Caco-2 (cell line): ENCODE measurements at regions of chrX and their contacts with region 1.

Region 1: GRCh38 chrX:111100186-111100980 is 4.4 kb downstream of the PAK3 start:
- DNase-seq: peak in 1 of 2 experiments; percentile 24
- H3K4me3 ChIP-seq: no peak overlapping the region
- H3K4me3 Mint-ChIP-seq: no peak overlapping the region
- H3K27ac Mint-ChIP-seq: no peak overlapping the region
- H3K4me1 ChIP-seq: no peaks in the 10 kb centered on the region
- H3K4me1 Mint-ChIP-seq: no peaks in the 10 kb centered on the region
- H3K27me3 ChIP-seq: no peaks in the 10 kb centered on the region
- H3K27me3 Mint-ChIP-seq: peaks cover 7% of the 10 kb centered on the region
- CTCF ChIP-seq: peak; percentile 16 to 28

Region 2: GRCh38 chrX:110836982-110837381 is 263.4 kb before region 1 on chrX:
- CTCF ChIA-PET with region 1: no interaction called
- POLR2A ChIA-PET with region 1: no interaction called
- intact Hi-C with region 1: no loop called
- DNase-seq: no peak
- H3K4me3 ChIP-seq: no peak overlapping the region
- H3K4me3 Mint-ChIP-seq: no peak overlapping the region
- H3K27ac Mint-ChIP-seq: no peak overlapping the region
- H3K4me1 ChIP-seq: no peaks in the 10 kb centered on the region
- H3K4me1 Mint-ChIP-seq: no peaks in the 10 kb centered on the region
- H3K27me3 ChIP-seq: no peaks in the 10 kb centered on the region
- H3K27me3 Mint-ChIP-seq: no peaks in the 10 kb centered on the region
- CTCF ChIP-seq: peak in 1 of 2 experiments; percentile 20

Region 3: DNA sequence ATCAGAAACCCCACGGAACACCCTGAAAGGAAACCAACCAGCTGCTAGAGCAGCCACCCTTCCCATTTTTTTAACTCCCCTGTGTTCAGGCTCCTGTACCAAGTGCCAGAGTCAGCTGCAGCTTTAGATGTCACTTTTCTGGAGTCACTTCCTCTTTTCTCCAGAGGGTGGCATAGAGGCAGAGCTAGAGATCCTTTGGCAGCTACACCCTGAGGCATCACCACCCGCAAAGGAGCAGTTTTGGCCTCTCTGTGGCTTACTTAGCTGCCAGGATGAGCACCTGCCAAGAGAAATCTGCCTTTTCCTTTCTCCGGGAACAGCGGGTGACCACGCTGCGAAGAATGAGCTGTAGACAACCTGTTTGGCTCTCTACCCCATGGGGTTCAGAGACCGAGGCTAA is 246.8 kb before region 1 on chrX:
- CTCF ChIA-PET with region 1: interaction called, 5 read pairs
- POLR2A ChIA-PET with region 1: no interaction called
- intact Hi-C with region 1: loop called (anchors 2 kb)
- DNase-seq: peak in 1 of 2 experiments; percentile 1
- H3K4me3 ChIP-seq: no peak overlapping the region
- H3K4me3 Mint-ChIP-seq: no peak overlapping the region
- H3K27ac Mint-ChIP-seq: no peak overlapping the region
- H3K4me1 ChIP-seq: no peaks in the 10 kb centered on the region
- H3K4me1 Mint-ChIP-seq: no peaks in the 10 kb centered on the region
- H3K27me3 ChIP-seq: no peaks in the 10 kb centered on the region; the same call in 1 of the 2 replicates
- H3K27me3 Mint-ChIP-seq: peaks cover 4% of the 10 kb centered on the region
- CTCF ChIP-seq: no peak

Region 4: DNA sequence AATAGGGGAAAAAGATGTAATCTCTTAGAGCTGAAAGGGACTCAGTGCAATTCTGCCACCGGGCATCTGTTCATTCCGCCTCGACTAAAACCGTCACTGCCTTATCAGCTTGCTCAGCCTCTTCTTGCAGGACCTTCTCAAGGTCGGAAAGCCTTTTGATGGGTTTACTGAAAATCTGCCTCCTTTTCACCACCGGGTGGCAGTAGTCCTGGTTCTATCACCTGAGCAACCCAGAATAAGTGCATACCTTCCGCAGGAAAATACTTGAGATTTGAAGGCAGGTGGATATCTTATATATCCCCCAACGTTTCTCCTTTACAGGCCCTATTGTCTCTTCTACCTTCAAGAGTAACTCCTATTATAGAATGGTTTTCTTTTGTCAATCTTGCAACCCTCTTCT is 107.8 kb before region 1 on chrX:
- CTCF ChIA-PET with region 1: interaction called, 8 read pairs
- POLR2A ChIA-PET with region 1: no interaction called
- intact Hi-C with region 1: loop called (anchors 1 kb)
- DNase-seq: peak; percentile 32
- H3K4me3 ChIP-seq: no peak overlapping the region
- H3K4me3 Mint-ChIP-seq: no peak overlapping the region
- H3K27ac Mint-ChIP-seq: no peak overlapping the region
- H3K4me1 ChIP-seq: no peaks in the 10 kb centered on the region
- H3K4me1 Mint-ChIP-seq: no peaks in the 10 kb centered on the region
- H3K27me3 ChIP-seq: no peaks in the 10 kb centered on the region
- H3K27me3 Mint-ChIP-seq: peaks cover 9% of the 10 kb centered on the region
- CTCF ChIP-seq: peak in 1 of 2 experiments; percentile 55

Region 5: GRCh38 chrX:111288841-111289240 is 188.5 kb after region 1 on chrX:
- CTCF ChIA-PET with region 1: no interaction called
- POLR2A ChIA-PET with region 1: no interaction called
- intact Hi-C with region 1: no loop called
- DNase-seq: no peak
- H3K4me3 ChIP-seq: no peak overlapping the region
- H3K4me3 Mint-ChIP-seq: no peak overlapping the region
- H3K27ac Mint-ChIP-seq: no peak overlapping the region
- H3K4me1 ChIP-seq: no peaks in the 10 kb centered on the region
- H3K4me1 Mint-ChIP-seq: peaks cover 5% of the 10 kb centered on the region
- H3K27me3 ChIP-seq: no peaks in the 10 kb centered on the region
- H3K27me3 Mint-ChIP-seq: peaks cover 3% of the 10 kb centered on the region
- CTCF ChIP-seq: no peak